Gastrocnemius medialis (tissue), 4 donors: ENCODE measurements at regions of chr17 and their contacts with region 1.

Region 1: DNA sequence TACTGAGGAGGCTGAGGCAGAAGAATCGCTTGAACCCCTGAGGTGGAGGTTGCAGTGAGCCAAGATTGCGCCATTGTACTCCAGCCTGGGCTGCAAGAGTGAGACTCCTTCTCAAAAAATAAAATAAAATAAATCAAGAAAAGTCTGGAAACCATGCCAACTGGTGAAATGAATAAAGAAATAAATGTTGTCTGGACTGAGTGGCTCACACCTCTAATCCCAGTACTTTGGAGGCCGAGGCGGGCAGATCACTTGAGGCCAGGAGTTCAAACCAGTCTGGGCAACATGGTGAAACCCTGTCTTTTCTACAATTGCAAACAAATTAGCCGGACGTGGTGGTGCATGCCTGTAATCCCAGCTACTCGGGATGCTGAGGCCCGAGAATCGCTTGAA is 744 bp upstream of the LRRC37A3 start:
- DNase-seq: peak in 1 of 2 donors; percentile 20
- ATAC-seq: peak; percentile 4 to 9
- H3K4me3 ChIP-seq: peak overlapping the region; percentile 64 to 97 (median 72)
- H3K27ac ChIP-seq: peak overlapping the region; percentile 89 to 97 (median 96)
- H3K4me1 ChIP-seq: no peaks in the 10 kb centered on the region
- H3K27me3 ChIP-seq: no peaks in the 10 kb centered on the region
- CTCF ChIP-seq: no peak
- POLR2A ChIP-seq: no peak

Region 2: DNA sequence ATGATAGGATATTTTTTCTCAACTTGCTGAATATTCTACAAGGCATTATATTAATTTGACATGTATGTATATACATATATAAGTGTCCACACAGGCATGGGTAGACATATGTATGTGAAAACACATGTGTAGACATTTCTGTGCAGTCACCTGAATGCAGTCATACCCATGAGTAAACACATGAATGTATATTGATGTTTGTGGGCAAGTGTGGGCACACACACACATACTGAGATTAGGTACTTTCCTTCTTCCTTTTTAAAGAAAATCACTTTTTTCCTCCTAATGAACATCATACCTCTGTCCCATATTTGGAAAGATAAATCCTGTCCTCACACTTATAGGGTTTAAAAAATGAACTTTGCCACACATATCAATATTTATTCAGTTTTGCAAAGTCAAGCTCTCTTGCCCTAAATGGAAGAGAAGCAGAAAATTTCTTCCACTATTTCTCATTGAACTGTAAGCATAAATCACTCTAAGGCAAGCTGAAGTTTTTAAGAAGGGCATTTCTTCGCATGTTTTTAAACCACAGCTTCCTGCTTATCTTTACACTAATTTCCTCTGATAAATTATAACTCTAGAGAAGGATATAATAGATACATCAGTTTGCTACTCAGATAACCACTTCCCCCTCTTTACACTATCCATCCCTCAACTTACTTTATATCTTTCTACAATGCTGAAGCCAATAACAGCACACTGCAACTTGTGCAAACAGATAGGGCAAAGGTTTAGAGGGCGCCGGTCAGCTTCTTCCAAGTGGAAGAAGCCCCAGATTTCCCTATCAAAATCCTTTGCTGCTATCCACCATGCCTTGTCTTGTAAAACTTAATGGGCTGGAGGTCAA is 48.9 kb after region 1 on chr17:
- in situ Hi-C with region 1: no loop called
- intact Hi-C with region 1: loop called (anchors 5 kb)
- DNase-seq: no peak
- ATAC-seq: no peak
- H3K4me3 ChIP-seq: no peak overlapping the region
- H3K27ac ChIP-seq: no peak overlapping the region
- H3K4me1 ChIP-seq: peaks cover 13 to 16% of the 10 kb centered on the region in 2 donors
- H3K27me3 ChIP-seq: no peaks in the 10 kb centered on the region
- CTCF ChIP-seq: no peak
- POLR2A ChIP-seq: no peak